CD14-positive monocyte (primary cell): ENCODE measurements at regions of chr7 and their contacts with region 1.

Region 1: DNA sequence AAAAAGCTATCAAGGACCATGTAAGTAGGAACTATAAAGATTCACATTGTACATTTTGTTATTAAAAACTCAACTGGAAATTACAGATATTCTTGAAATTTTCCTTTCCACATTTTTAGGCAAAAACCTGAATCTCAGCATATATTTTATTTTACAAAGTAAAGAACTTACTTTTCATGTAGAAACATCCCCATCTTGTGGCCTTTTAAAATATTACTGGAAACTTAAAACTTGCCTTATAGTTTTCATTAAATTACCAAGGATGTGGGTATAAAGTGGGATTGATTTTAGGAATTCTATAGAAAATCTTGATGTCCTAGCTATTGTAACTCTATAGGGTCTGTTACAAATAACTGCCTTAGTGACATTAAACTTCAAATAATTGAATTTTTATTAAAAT is 10.6 kb downstream of the DBF4 start:
- DNase-seq: peak in 2 of 3 donors; percentile 32 to 59
- H3K4me3 ChIP-seq: no peak overlapping the region
- H3K4me3 Mint-ChIP-seq: no peak overlapping the region
- H3K27ac ChIP-seq: no peak overlapping the region
- H3K27ac Mint-ChIP-seq: no peak overlapping the region
- H3K4me1 ChIP-seq: no peaks in the 10 kb centered on the region
- H3K4me1 Mint-ChIP-seq: no peaks in the 10 kb centered on the region
- H3K27me3 ChIP-seq: no peaks in the 10 kb centered on the region
- H3K27me3 Mint-ChIP-seq: no peaks in the 10 kb centered on the region
- CTCF ChIP-seq: peak; percentile 73

Region 2: DNA sequence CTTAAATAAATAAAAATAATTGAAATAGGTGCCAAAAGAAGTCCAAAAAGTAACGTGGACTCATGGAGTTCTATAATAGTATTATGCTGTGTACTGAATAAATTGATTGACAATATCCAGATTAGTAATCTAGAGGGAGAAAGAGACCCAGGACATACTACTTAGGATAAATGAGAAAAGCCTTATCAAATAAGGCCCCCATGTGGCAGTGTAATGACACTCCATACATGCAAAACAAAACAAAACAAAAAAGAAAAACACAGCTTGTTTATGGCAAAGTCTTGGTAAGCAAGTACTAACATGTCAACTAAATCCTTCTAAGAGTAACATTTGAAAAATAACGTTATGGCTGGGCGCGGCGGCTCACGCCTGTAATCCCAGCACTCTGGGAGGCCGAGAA is 262.2 kb before region 1 on chr7:
- intact Hi-C with region 1: no loop called
- DNase-seq: no peak
- H3K4me3 ChIP-seq: no peak overlapping the region
- H3K4me3 Mint-ChIP-seq: no peak overlapping the region
- H3K27ac ChIP-seq: no peak overlapping the region
- H3K27ac Mint-ChIP-seq: no peak overlapping the region
- H3K4me1 ChIP-seq: peaks cover 16 to 19% of the 10 kb centered on the region in 2 donors
- H3K4me1 Mint-ChIP-seq: peaks cover 12% of the 10 kb centered on the region
- H3K27me3 ChIP-seq: peaks cover 18 to 26% of the 10 kb centered on the region in 2 donors
- H3K27me3 Mint-ChIP-seq: peaks cover 17 to 32% (median 19%) of the 10 kb centered on the region in 3 donors
- CTCF ChIP-seq: no peak

Region 3: DNA sequence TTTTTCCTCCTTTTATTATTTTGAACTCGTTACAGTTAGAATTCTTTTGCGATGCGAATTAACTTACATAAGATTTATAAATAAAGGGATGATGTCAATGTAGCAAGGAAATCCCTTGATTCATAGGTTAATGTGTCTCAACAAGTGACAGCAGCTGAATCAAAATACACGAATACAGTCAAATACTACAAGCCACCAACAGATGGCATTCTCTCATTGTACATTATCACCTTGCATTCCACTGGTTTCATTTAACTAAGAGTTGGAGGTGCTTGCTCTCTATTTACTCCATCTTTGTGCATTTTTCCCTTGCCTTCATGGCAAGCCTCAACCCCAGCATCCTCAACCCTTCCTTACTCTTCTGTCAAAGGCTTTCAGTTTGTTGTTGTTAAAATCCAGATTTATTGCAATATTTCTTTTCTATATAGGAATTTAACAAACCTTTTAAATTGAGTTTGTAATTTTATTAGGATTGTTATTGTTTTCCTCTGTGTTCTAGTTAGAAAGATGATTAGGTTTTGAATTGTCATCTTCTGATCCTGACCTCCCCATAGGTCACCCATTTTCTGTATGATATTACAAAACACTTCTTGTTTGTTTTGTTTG is 89.0 kb before region 1 on chr7:
- intact Hi-C with region 1: loop called (anchors 5 kb)
- DNase-seq: peak; percentile 18 to 47 (median 37)
- H3K4me3 ChIP-seq: no peak overlapping the region
- H3K4me3 Mint-ChIP-seq: no peak overlapping the region
- H3K27ac ChIP-seq: no peak overlapping the region
- H3K27ac Mint-ChIP-seq: no peak overlapping the region
- H3K4me1 ChIP-seq: no peaks in the 10 kb centered on the region
- H3K4me1 Mint-ChIP-seq: no peaks in the 10 kb centered on the region
- H3K27me3 ChIP-seq: no peaks in the 10 kb centered on the region
- H3K27me3 Mint-ChIP-seq: peaks cover 0 to 2% (median 2%) of the 10 kb centered on the region in 3 donors
- CTCF ChIP-seq: peak; percentile 67